ENCODE measurements at regions of chr15 and their contacts with region 1.

Region 1: GRCh38 chr15:74950078-74951000 is 6.2 kb downstream of the RPP25 start:
- DNase-seq: peak; percentile 90 to 94
- H3K4me3 ChIP-seq: no peak overlapping the region
- H3K4me1 ChIP-seq: peaks cover 5% of the 10 kb centered on the region
- H3K27me3 ChIP-seq: no peaks in the 10 kb centered on the region

Region 2: DNA sequence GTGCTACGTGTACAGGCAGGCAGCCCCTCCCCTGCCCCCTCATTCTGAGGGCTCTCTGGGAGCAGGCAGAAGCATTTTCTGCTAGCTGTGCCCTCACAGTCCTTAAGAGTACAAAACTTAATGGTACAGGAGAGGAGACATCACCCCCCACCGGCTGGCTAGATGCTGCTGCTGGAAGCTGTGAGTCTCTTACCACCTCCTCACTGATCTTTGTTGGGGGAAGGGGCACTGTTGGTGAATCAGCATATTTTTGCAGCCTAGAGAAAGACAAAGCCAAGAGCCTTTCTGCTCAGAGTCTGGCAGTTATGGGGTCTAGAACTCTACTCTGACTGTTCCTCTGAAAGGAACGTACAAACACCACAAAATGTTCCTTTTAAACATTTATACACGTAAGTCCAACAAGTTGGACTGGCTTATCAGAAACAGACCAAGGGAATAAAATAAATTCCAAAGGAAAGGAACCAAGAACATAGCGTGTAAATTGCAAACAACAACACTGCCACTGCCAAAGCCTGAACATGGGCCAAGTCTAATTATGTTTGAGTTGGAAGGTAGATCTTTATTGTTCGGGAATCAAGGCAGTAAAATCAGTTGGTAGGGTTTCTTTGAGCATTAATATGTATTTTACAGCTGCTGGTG is 307.5 kb before region 1 on chr15:
- in situ Hi-C with region 1: loop called (anchors 5 kb)
- DNase-seq: no peak
- H3K4me3 ChIP-seq: no peak overlapping the region
- H3K4me1 ChIP-seq: peaks cover 8% of the 10 kb centered on the region; the same call in 1 of the 2 replicates
- H3K27me3 ChIP-seq: no peaks in the 10 kb centered on the region